ENCODE measurements at regions of chr14 and their contacts with region 1.

Region 1: GRCh38 chr14:22886500-22887259 is 3.7 kb downstream of the REM2 start:
- DNase-seq: peak; percentile 80
- ATAC-seq: peak; percentile 46
- H3K4me3 Mint-ChIP-seq: peak overlapping the region; percentile 88
- H3K27ac Mint-ChIP-seq: peak overlapping the region; percentile 97
- H3K4me1 Mint-ChIP-seq: peaks cover 41% of the 10 kb centered on the region
- H3K27me3 Mint-ChIP-seq: peaks cover 30% of the 10 kb centered on the region
- CTCF ChIP-seq: no peak

Region 2: DNA sequence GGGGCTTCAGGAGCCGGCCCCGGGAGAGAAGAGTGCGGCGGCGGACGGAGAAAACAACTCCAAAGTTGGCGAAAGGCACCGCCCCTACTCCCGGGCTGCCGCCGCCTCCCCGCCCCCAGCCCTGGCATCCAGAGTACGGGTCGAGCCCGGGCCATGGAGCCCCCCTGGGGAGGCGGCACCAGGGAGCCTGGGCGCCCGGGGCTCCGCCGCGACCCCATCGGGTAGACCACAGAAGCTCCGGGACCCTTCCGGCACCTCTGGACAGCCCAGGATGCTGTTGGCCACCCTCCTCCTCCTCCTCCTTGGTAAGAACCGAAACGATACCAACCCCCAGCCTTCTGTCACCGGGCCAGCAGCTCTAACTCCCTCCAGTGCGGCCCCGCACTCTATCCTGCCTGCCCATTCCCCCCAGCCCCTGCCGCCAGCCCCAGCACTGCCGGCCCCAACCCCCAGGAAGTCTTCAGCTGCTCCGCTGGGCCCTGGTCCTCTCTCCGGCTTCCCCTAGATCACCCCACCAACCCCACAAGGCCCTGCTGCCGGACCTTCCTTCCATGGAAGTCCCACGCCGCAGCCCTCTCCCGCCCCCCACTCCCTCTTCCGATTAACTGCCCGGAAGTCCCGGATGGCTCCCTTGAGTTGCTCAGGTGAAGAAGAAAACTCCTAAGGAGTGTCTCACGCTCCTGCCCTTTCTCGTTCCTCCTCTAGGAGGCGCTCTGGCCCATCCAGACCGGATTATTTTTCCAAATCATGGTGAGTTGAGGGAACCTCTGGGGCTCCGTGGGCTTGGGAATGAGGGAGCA is 14.4 kb before region 1 on chr14:
- CTCF ChIA-PET with region 1: interaction called, 57 read pairs
- POLR2A ChIA-PET with region 1: interaction called, 32 read pairs
- DNase-seq: peak; percentile 94
- ATAC-seq: peak; percentile 67
- H3K4me3 Mint-ChIP-seq: peak overlapping the region; percentile 83
- H3K27ac Mint-ChIP-seq: peak overlapping the region; percentile 36
- H3K4me1 Mint-ChIP-seq: peaks cover 18% of the 10 kb centered on the region
- H3K27me3 Mint-ChIP-seq: no peaks in the 10 kb centered on the region
- CTCF ChIP-seq: peak; percentile 90

Region 3: GRCh38 chr14:22900081-22900799 is 13.6 kb after region 1 on chr14:
- CTCF ChIA-PET with region 1: interaction called, 31 read pairs
- POLR2A ChIA-PET with region 1: interaction called, 6 read pairs
- DNase-seq: peak; percentile 28
- ATAC-seq: peak; percentile 79
- H3K4me3 Mint-ChIP-seq: no peak overlapping the region
- H3K27ac Mint-ChIP-seq: no peak overlapping the region
- H3K4me1 Mint-ChIP-seq: peaks cover 8% of the 10 kb centered on the region
- H3K27me3 Mint-ChIP-seq: peaks cover 49% of the 10 kb centered on the region
- CTCF ChIP-seq: 0 out of 2 replicates have a peak, but pooled peaks have one; percentile 27

Region 4: GRCh38 chr14:22918804-22919600 is 32.3 kb after region 1 on chr14 and contains the start of gene RBM23:
- CTCF ChIA-PET with region 1: interaction called, 7 read pairs
- POLR2A ChIA-PET with region 1: interaction called, 12 read pairs
- DNase-seq: peak; percentile 100
- ATAC-seq: peak; percentile 98
- H3K4me3 Mint-ChIP-seq: peak within 1 kb of the TSS; percentile 92
- H3K27ac Mint-ChIP-seq: peak within 1 kb of the TSS; percentile 100
- H3K4me1 Mint-ChIP-seq: peaks cover 17% of the 10 kb centered on the region
- H3K27me3 Mint-ChIP-seq: peaks cover 2% of the 10 kb centered on the region; the same call in 1 of the 2 replicates
- CTCF ChIP-seq: no peak
- total RNA-seq, gene RBM23: 42.4 to 49.4 TPM (median 47.4 TPM) in 3 replicates

Measured in WTC11 (cell line).